Common myeloid progenitor, CD34-positive (primary cell): ENCODE measurements at regions of chr16 and their contacts with region 1.

Region 1: DNA sequence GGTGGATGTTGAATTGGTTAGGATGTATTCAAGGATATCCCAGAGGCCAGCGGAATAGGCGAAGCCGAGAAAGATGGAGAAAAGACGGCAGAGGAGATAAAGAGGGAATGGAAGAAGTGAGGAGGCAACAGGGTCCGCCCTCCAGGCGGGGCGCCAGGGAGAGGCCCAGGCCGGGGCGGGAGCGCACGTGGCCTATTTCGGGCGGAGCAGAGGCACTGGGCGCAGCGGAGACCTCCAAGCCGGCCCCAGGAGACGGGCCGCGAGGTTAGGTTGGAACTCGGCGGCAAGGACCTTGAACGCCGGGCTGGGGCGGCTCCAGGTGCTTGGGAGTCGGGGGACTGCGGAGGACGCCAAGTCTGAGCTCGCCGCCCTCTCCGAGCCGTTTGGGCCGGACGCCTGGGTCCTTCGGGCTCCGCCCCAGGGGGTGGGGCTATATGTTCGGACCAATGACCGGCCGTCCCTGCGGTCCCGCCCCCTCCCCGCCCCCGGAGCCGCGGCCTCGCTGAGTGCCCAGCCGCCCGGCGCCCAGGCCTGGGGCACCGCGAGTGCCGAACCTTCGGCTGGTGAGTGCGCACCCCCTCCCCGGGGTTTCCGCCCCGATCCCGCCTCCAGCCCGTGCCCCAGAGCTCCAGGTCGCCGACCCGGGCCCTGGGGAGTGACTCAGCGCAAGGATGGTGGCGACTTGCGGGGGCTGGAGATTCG is at the start of gene ZNF771:
- DNase-seq: peak; percentile 78 to 81 (median 80)
- H3K4me3 ChIP-seq: peak within 1 kb of the TSS; percentile 56 to 81 (median 76)
- H3K27ac ChIP-seq: peak within 1 kb of the TSS in 1 of 2 experiments; percentile 75
- H3K4me1 ChIP-seq: peaks cover 3 to 35% (median 26%) of the 10 kb centered on the region in 4 experiments
- H3K27me3 ChIP-seq: no peaks in the 10 kb centered on the region

Region 2: GRCh38 chr16:30355144-30355894 is 51.9 kb before region 1 on chr16 and contains the start of gene CD2BP2:
- CTCF ChIA-PET with region 1: interaction called, 18 read pairs
- POLR2A ChIA-PET with region 1: no interaction called
- DNase-seq: peak; percentile 89 to 91 (median 90)
- H3K4me3 ChIP-seq: peak within 1 kb of the TSS; percentile 85 to 96 (median 92)
- H3K27ac ChIP-seq: peak within 1 kb of the TSS; percentile 68 to 88
- H3K4me1 ChIP-seq: peaks cover 0 to 33% (median 25%) of the 10 kb centered on the region in 4 experiments
- H3K27me3 ChIP-seq: no peaks in the 10 kb centered on the region

Region 3: DNA sequence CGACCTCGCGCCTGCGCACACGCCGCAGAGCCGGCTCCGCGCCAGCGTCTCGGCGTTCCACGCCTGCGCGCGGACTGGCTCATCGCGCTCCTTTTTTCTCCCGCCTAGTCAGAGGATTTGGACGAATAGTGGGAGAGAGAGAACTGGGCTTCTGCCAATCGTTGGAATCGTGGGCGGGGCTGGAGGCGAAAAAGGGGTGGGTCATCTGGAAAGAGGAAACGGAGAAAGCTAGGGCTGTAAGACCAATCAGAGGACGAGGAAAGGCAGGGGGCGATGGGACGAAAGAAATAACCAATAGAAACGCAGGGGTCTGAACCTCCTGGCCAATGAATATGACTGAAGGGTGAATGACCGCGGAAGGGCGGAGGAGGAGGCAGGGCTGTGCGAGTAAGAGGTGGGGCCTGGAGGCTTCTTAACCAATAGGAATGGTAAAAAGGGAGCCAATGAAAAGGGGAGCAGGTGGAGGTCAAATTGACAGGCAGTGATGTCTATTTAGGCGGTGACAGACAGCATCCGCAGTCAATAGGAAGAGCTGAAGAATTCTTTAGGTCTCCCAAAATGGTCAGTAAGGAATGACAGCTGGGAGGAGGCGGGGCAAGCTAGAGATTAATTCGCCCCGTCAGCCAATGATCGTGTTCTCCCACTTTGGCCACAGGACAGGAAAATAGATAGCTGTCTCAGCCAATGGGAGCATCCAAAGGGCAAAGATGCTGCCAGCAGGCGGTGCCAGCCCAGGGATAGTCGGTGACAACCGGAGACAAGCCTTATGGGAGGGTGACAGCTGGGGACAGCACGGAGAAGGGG is 36.6 kb before region 1 on chr16 and contains the start of gene TBC1D10B:
- CTCF ChIA-PET with region 1: interaction called, 16 read pairs
- POLR2A ChIA-PET with region 1: interaction called, 5 read pairs
- DNase-seq: peak; percentile 100
- H3K4me3 ChIP-seq: peak within 1 kb of the TSS; percentile 68 to 93 (median 75)
- H3K27ac ChIP-seq: peak within 1 kb of the TSS; percentile 25 to 82
- H3K4me1 ChIP-seq: peaks cover 11 to 42% (median 32%) of the 10 kb centered on the region in 4 experiments
- H3K27me3 ChIP-seq: no peaks in the 10 kb centered on the region

Region 4: DNA sequence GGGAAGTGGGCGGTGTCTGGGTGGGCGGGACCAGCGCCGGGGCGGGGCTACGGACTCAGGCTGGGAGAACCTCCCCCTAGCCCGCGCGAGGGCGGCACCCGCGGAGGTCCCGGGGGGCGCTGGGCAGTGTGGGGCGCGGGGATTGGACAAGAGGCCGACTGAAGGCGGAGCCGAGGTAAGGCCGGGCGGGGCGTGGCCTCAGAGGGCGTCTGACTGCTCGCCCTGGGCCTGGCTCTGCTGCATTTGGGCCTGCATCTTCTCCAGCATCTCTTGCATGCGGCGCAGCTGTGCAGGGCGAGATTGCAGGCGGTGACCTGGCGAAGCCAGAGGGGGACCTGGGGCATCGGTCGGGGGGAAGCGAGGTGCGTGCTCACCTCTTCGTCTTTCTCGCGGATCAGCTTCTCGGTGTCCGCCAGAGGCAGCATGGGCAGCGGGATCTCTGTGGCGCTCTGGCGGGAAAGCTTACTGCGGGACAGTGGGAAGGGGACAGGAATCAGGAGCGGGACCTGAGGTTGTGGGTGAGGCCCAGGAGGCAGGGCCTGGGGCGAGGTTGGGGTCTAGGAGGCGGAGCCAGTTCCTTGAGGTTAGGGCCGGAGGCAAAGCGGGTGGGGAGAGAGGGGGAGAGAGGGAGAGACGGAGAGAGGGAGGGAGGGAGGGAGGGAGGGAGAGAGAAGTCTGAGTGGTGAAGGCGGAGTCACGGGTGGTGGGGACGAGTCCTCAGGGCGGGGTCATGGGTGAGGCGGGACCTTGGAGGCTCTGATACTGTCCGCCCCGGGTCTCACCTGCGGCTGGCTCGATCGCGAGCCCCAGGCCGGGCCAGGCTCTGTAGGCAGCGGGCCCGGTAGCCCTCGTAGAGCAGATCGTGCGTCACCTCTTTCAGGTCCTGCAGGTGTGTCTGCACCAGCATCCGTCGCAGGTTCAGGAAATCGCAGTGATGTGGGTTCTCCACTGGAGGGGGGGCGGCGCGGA is 28.7 kb before region 1 on chr16:
- CTCF ChIA-PET with region 1: interaction called, 11 read pairs
- POLR2A ChIA-PET with region 1: interaction called, 6 read pairs
- DNase-seq: peak; percentile 98 to 99 (median 99)
- H3K4me3 ChIP-seq: peak overlapping the region; percentile 36 to 93 (median 79)
- H3K27ac ChIP-seq: peak overlapping the region; percentile 94 to 97
- H3K4me1 ChIP-seq: peaks cover 0 to 64% (median 54%) of the 10 kb centered on the region in 4 experiments
- H3K27me3 ChIP-seq: no peaks in the 10 kb centered on the region

Region 5: DNA sequence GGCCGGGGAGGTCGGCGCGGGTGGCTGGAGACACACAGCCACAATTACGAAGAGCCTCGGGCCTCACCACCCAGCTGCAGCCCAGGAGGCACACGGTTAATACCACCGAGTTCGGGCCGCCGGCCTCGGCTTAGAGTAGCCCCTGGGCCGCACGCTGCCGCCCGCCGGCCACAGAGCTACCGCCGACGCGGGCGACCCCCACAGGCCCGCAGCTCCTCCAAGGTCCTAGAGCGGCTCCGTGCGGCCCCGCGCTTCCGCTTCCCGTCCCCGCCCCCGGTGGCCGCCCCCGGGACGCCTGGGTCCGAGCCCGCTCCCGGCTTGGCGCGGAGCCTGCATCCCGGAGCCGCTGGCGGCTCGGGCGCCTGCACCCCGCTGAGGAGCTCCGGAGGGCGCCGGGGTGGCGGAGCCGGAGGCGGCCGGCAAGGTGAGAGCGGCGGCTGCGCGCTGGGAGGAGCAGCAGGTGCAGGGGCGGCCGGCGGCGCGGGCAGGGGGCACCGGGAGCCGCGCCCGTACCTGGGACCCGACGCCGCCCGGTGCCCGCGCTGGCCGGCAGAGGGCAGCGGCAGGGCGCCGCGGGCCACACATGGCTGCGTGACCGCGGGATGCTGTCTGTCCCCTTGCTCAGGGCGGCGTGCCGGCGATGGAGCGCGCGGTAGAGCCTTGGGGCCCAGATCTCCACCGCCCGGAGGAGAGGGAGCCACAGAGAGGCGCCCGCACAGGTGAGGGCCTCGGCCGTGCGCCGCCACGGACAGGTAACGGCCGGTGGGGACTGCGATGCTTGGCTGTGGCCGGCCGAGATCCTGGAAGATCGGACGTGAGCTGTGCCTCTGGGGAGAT is 11.9 kb before region 1 on chr16 and contains the start of gene ZNF48:
- CTCF ChIA-PET with region 1: interaction called, 97 read pairs
- POLR2A ChIA-PET with region 1: interaction called, 4 read pairs
- DNase-seq: peak; percentile 80 to 88 (median 86)
- H3K4me3 ChIP-seq: peak within 1 kb of the TSS; percentile 74 to 91 (median 77)
- H3K27ac ChIP-seq: peak within 1 kb of the TSS; percentile 33 to 71
- H3K4me1 ChIP-seq: peaks cover 7 to 41% (median 36%) of the 10 kb centered on the region in 4 experiments
- H3K27me3 ChIP-seq: no peaks in the 10 kb centered on the region

Region 6: GRCh38 chr16:30417529-30418349 is 10.5 kb after region 1 on chr16:
- CTCF ChIA-PET with region 1: interaction called, 12 read pairs
- POLR2A ChIA-PET with region 1: interaction called, 3 read pairs
- DNase-seq: peak; percentile 90 to 96 (median 95)
- H3K4me3 ChIP-seq: peak overlapping the region; percentile 57 to 82 (median 66)
- H3K27ac ChIP-seq: peak overlapping the region in 1 of 2 experiments; percentile 54
- H3K4me1 ChIP-seq: peaks cover 0 to 18% (median 15%) of the 10 kb centered on the region in 4 experiments
- H3K27me3 ChIP-seq: no peaks in the 10 kb centered on the region